GM10248 (cell line): ENCODE measurements at regions of chr15 and their contacts with region 1.

Region 1: DNA sequence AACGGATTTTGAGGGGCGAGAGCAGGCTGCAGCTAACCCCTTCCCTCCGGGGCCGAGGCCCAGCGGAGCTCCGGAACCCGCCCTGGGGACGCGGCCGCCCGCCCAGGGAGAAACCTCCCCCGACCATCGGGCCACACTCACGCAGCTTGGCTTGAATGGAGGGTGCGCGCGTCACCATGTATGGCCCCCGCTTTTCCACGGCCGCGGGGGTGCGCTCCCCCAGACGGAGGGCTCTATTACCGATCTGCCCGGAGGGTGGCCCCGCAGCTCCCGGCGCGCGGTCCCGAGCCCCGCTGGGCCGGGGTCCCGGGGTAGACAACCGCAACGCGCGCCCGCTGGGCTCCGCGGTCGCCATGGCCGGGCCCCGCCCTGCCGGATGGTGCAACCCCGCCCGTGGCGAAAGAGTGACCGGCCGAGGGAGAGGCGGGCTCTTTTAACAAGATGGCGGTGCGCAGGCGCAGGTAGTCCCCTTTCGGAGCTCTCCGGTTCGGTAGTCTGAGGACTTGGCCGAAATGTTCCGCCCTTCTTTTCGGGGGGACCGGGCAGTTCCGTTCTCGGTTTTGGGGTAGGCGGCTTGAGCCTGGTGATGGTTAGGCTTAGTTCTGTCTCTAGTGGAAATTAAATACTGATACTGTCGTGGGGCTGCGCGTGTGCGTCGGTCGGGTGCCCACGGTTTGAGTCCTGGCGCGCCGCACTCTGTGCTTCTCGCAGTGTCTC is at the start of gene FAM219B:
- DNase-seq: peak; percentile 97
- CTCF ChIP-seq: no peak

Region 2: GRCh38 chr15:74584779-74585178 is 321.8 kb before region 1 on chr15:
- CTCF ChIA-PET with region 1: no interaction called
- POLR2A ChIA-PET with region 1: no interaction called
- DNase-seq: no peak
- CTCF ChIP-seq: no peak

Region 3: DNA sequence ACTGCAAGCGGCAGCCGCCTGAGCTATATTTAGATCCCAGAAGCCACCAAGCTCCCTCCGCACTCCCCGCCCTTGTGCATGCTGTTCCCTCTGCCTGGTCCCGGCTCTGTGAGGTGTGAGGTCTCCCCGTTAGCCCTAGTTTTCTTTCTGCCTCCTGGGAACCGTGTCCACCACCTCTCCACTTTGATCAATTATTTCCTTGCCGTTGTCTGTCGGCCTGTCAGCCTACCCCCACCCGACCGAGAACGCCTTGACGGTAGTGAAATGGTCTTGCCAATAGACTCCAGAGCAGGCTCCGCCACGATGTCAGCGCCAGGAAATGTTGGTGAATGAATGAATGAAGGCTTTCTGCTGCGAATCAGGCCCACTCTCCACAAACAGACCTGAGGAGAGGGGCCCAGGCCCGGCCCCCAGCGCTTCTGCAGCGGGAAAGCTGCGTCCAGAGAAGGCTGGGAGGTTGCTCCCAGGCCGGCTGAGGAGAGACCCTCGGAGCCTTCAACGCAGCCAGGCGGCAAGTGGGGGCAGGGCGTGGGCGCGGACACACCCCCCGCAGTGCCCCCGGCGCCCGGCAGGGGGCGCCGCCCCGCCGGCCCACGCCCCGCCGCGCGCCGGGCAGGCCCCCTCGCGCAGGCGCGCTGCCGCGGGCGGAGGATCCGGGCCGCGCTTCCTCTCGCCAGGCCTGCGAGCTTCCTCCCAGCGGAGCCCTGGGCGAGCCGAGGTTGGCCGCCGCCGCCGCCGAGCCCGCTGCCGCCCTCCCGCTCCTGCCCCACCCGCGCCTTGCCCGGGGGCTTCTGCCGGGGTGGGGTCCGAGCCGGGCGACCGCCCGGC is 125.0 kb before region 1 on chr15 and contains the start of gene CSK:
- CTCF ChIA-PET with region 1: interaction called, 13 read pairs
- POLR2A ChIA-PET with region 1: interaction called, 10 read pairs
- DNase-seq: peak; percentile 87
- CTCF ChIP-seq: peak; percentile 66

Region 4: DNA sequence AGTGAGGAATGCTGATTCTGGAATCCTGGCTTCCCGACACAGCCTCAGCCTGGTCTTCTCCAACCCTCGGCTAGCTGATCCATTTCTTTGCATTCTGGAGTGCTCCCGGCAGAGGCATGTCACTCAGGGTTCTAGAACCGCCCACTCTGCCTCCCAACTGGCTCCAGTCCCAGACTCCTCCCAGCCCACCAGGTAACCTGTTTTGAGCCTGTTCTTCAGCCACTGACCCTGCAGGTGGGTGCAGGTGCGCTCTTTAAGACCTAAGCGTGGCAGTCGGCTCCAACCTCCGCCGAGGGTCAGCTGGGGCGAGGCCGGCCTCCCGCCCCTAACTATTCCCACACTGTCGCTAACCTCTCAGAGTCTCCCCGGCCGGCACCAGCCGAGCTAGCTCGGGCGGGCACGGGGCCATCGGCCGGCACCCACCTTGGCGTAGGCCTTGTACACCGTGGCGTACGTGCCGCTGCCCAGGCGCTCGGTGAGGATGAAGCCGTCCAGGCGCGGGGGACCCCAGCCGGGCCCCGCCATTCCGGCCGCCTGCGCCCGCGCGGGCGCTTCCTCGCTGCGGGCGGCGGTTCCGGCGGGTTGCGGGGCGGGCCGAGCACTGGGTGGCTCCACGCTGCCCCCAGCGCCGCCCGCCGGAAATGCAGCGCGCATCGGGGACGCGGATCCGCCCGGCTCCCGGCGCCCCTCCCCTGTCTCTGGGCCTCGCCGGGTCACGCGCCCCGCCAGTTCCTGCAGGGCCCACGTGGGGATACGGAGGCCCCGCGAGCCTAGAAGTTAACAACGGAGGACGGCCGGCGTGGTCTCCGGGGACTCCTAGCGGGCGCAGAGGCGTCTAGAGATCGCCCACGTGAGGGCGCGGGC is 63.8 kb before region 1 on chr15 and contains the start of gene ULK3:
- CTCF ChIA-PET with region 1: interaction called, 16 read pairs
- POLR2A ChIA-PET with region 1: interaction called, 3 read pairs
- DNase-seq: peak; percentile 97
- CTCF ChIP-seq: peak; percentile 63

Region 5: GRCh38 chr15:74873036-74873755 is 33.4 kb before region 1 on chr15 and contains the start of gene SCAMP2:
- CTCF ChIA-PET with region 1: interaction called, 131 read pairs
- POLR2A ChIA-PET with region 1: interaction called, 5 read pairs
- DNase-seq: peak; percentile 96
- CTCF ChIP-seq: no peak

Region 6: DNA sequence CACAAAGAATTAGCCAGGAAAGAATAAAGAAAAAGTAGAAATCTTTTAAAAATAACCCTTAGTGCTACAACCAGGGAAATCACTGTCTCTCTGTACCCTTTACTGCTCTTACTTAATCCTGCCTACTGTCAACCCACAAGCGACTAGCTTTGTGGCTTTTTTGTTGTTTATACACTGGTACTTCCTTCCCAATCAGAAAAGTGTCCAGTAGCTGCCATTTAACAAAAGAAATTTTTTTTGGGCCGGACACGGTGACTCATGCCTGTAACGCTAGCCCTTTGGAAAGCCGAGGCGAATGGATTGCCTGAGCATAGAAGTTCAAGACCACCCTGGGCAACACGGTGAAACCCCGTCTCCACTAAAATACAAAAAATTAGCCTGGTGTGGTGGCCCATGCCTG is 13.9 kb after region 1 on chr15:
- CTCF ChIA-PET with region 1: interaction called, 53 read pairs
- POLR2A ChIA-PET with region 1: no interaction called
- DNase-seq: no peak
- CTCF ChIP-seq: no peak

Region 7: GRCh38 chr15:74950078-74951000 is 43.7 kb after region 1 on chr15:
- CTCF ChIA-PET with region 1: interaction called, 23 read pairs
- POLR2A ChIA-PET with region 1: no interaction called
- DNase-seq: peak; percentile 73
- CTCF ChIP-seq: peak; percentile 98

Region 8: GRCh38 chr15:75178171-75179075 is 271.8 kb after region 1 on chr15:
- CTCF ChIA-PET with region 1: no interaction called
- POLR2A ChIA-PET with region 1: no interaction called
- DNase-seq: peak; percentile 68
- CTCF ChIP-seq: no peak